Endothelial cell of umbilical vein (primary cell): ENCODE measurements at regions of chr10 and their contacts with region 1.

Region 1: DNA sequence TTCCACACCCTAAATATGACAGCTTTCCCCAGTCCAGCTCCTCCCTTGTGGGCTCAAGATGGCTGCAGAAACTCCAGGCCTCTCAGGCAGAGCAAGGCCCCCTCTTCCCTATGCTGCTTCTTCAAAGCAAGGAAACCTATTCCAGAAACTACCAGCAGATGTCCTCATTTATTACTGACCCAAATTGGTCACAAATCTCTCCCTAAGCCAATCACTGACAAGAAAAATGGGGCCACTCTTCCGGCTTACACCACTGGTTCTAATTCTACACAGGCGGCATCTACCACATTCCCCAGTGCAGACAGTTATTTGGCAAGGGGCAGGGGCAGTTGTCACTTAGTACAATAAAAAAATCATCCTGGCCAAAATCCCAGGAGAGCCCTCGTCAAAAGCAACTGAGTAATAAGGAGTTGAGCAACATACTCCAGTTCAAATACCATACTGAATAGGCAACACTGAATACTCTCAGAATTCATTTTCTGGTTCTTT is 150.4 kb downstream of the SFMBT2 start:
- DNase-seq: peak; percentile 64
- H3K4me3 ChIP-seq: no peak overlapping the region
- H3K27ac ChIP-seq: no peak overlapping the region
- H3K4me1 ChIP-seq: peaks cover 10% of the 10 kb centered on the region
- H3K27me3 ChIP-seq: no peaks in the 10 kb centered on the region
- CTCF ChIP-seq: peak; percentile 46 to 57
- POLR2A ChIP-seq: no peak

Region 2: DNA sequence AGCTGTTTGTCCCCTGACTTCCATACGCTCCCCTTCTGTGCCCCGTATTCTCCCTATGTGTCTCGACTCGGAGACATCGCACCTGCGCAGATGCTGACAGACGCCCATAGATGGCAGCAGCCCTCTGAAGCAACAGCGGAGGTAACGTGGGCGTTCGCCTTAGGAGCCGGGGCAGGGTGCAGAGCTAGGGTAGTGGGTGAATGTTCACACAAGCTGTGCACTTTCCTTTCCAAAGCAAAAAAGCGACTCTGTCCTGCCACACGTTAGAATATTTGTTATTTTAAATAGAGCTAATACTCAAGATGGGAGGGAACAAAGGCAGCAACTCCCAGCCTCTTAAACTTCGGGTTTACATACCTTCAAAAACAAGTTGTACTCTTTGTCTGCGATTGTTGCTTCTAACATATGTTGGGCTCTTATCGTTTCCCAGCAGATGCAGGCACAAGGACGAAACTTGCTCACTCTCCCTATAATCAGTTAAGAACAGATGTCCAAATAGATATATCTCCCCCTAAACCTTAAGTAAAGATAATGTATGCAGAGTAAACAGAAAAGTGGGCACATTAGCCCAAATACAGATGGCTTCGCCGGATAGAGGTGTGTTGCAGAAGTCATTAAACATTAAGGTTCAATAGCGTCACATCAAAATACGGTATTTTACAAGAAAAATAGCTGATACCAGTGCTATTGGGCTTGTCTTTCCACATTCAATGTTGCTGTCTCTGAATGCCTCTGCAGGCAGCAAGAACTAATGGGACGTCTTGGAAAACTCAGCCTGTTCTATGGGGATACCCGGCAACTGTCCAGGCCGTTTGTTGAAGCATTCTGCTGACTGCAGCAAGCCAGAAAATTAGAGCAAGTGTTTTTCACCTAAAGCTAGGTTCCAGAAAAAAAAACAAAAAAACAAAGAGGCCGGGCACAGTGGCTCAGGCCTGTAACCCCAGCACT is 340.1 kb before region 1 on chr10:
- CTCF ChIA-PET with region 1: no interaction called
- POLR2A ChIA-PET with region 1: no interaction called
- dilution Hi-C with region 1: no loop called
- intact Hi-C with region 1: loop called (anchors 10 kb)
- DNase-seq: peak; percentile 48
- H3K4me3 ChIP-seq: no peak overlapping the region
- H3K27ac ChIP-seq: no peak overlapping the region
- H3K4me1 ChIP-seq: peaks cover 5% of the 10 kb centered on the region
- H3K27me3 ChIP-seq: no peaks in the 10 kb centered on the region
- CTCF ChIP-seq: peak; percentile 46 to 70
- POLR2A ChIP-seq: no peak